ENCODE measurements at regions of chr22 and their contacts with region 1.

Region 1: GRCh38 chr22:36481393-36482168 is at the start of gene TXN2:
- DNase-seq: peak; percentile 93 to 99 (median 94)

Region 2: GRCh38 chr22:36368359-36368983 is 113.1 kb before region 1 on chr22:
- intact Hi-C with region 1: no loop called
- DNase-seq: no peak

Region 3: GRCh38 chr22:36387752-36388518 is 93.6 kb before region 1 on chr22 and contains the start of gene MYH9:
- intact Hi-C with region 1: loop called (anchors 2 kb)
- DNase-seq: peak; percentile 98 to 100 (median 99)

Region 4: GRCh38 chr22:36445158-36445668 is 36.4 kb before region 1 on chr22:
- intact Hi-C with region 1: no loop called
- DNase-seq: no peak

Region 5: GRCh38 chr22:36506637-36507517 is 25.3 kb after region 1 on chr22 and contains the start of gene FOXRED2:
- intact Hi-C with region 1: loop called (anchors 1 kb)
- DNase-seq: peak; percentile 79 to 98 (median 86)

Region 6: DNA sequence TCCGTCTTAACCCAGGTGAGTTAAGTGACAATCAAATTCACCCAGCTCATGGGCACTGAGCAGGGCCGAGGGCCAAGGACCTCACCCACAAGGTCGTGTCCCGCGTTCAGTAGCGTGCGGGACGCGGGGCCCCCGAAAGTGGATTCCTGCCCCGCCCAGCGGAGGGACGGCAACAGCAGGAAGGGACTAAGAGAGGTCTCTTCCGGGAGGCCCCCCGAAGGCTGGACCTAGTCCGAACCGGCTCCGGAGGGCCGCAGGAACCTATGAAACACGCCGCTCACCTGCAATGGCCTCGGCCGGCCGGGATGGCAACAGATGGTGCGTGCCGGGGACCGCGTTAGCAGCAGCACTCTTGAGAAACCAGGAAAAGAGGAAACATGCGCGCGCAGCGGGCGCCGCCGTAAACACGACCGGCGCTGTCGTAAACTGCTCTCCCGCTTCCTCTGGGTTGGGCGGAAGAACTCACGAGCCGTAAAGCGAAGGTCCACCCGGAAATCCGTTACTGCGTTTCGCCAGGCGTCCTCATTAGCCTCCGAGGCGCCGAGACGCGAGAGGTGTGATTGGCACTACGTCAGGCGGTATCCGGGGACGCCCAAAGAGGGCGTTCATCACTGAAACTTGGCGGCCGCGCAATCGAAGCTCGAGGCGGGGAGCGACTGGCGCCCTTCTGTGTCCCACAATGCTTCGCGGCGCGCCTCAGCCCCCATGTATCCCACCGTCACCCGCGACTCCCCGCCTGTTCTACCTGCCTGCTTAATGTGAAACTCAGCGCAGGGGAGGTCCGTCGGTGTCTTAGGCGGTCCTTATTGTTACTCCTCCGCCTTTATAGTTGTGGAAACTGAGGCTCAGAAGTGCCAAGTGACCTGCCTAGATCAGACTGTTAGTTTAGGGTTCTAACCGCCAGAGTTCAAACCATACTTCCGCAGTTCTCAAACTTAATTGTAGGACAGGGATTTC is 47.5 kb after region 1 on chr22 and contains the start of gene EIF3D:
- intact Hi-C with region 1: loop called (anchors 2 kb)
- DNase-seq: peak; percentile 93 to 99 (median 96)

Region 7: DNA sequence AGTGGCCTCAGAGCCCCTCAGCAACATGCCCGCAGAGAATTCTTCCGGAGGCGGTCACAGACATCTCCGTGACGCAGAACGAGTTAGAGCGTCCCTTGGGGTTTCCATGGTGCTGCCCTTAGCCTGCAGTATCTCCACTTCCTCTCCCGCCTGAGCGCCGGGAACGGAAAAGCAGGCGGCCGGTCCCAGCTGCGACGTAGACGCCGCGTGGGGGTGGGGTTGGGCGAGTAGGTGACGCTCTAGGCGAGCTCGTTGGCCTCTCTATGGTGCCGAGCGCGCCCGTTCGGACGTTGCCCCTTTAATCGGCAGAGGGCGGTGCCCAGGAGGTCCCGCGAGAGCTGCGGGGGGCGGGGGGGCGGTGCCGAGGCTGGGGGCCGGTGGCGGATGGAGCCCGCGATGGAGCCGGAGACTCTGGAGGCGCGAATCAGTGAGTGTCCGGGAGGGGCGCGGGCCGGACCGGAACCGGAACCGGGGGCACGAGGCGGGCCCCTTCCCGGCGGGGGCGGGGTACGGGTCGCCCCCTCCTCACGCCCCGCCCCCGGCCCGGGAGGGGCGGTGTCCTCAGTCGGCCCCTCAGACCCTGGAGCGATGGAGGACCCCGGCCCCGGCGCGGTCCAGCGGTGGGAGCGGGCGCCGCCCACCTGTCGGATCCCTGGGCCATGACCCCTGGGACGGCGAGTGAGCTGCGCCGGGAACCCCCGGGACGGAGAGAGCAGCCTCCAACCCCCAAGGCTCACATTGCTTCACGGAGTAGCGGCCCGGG is 1127.1 kb after region 1 on chr22 and contains the start of gene GGA1:
- intact Hi-C with region 1: no loop called
- DNase-seq: peak; percentile 91 to 99 (median 94)

Measured in posterior cingulate gyrus (tissue), 11 donors.